A673 (cell line): ENCODE measurements at regions of chr1 and their contacts with region 1.

Region 1: GRCh38 chr1:54810100-54810942 is 9.2 kb upstream of the TTC22 start:
- DNase-seq: peak; percentile 70
- H3K4me3 ChIP-seq: no peak overlapping the region
- H3K27ac ChIP-seq: no peak overlapping the region
- H3K4me1 ChIP-seq: peaks cover 9% of the 10 kb centered on the region
- H3K27me3 ChIP-seq: no peaks in the 10 kb centered on the region
- CTCF ChIP-seq: peak; percentile 85

Region 2: DNA sequence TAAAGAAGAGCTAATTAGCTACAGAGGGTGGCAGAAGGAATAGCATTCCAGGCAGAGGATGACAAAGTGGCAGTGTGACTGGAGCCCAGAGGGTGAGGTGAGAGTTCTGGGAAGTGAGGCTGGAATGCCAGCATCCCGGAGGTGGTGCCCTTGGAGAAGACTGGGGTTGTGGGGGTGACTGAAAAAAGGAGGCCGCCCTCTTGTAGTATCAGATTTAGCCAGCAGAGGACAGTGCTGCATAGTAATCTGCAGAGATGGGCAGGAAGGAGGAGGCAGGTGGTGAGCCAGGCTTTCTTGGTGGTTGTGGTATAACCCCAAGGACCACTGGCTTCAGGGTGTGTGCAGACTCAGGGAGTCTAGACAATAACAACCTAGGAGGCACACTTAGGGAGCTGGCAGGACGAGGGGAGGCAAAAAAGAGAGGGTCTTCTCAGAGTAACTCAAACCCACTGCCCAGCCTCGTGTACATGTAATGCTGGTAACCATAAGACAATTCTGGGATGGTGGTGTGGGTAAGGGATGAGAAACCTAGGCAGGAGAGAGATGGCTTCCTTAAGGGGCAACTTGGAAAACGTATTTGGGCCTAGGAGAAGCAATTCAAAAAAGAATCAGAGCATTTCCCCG is 138.2 kb before region 1 on chr1:
- CTCF ChIA-PET with region 1: interaction called, 4 read pairs
- POLR2A ChIA-PET with region 1: no interaction called
- intact Hi-C with region 1: loop called (anchors 1 kb)
- DNase-seq: peak; percentile 65
- H3K4me3 ChIP-seq: no peak overlapping the region
- H3K27ac ChIP-seq: no peak overlapping the region
- H3K4me1 ChIP-seq: no peaks in the 10 kb centered on the region
- H3K27me3 ChIP-seq: no peaks in the 10 kb centered on the region
- CTCF ChIP-seq: peak; percentile 80

Region 3: GRCh38 chr1:54709547-54710467 is 100.5 kb before region 1 on chr1:
- CTCF ChIA-PET with region 1: no interaction called
- POLR2A ChIA-PET with region 1: no interaction called
- intact Hi-C with region 1: no loop called
- DNase-seq: no peak
- H3K4me3 ChIP-seq: no peak overlapping the region
- H3K27ac ChIP-seq: no peak overlapping the region
- H3K4me1 ChIP-seq: no peaks in the 10 kb centered on the region
- H3K27me3 ChIP-seq: peaks cover 29% of the 10 kb centered on the region
- CTCF ChIP-seq: no peak